ENCODE measurements at regions of chr7 and their contacts with region 1.

Region 1: GRCh38 chr7:26365077-26365900 is 73.6 kb downstream of the SNX10 start:
- DNase-seq: peak; percentile 72
- H3K4me3 Mint-ChIP-seq: no peak overlapping the region
- H3K27ac Mint-ChIP-seq: no peak overlapping the region
- H3K4me1 Mint-ChIP-seq: no peaks in the 10 kb centered on the region
- H3K27me3 Mint-ChIP-seq: no peaks in the 10 kb centered on the region
- CTCF ChIP-seq: peak; percentile 82

Region 2: DNA sequence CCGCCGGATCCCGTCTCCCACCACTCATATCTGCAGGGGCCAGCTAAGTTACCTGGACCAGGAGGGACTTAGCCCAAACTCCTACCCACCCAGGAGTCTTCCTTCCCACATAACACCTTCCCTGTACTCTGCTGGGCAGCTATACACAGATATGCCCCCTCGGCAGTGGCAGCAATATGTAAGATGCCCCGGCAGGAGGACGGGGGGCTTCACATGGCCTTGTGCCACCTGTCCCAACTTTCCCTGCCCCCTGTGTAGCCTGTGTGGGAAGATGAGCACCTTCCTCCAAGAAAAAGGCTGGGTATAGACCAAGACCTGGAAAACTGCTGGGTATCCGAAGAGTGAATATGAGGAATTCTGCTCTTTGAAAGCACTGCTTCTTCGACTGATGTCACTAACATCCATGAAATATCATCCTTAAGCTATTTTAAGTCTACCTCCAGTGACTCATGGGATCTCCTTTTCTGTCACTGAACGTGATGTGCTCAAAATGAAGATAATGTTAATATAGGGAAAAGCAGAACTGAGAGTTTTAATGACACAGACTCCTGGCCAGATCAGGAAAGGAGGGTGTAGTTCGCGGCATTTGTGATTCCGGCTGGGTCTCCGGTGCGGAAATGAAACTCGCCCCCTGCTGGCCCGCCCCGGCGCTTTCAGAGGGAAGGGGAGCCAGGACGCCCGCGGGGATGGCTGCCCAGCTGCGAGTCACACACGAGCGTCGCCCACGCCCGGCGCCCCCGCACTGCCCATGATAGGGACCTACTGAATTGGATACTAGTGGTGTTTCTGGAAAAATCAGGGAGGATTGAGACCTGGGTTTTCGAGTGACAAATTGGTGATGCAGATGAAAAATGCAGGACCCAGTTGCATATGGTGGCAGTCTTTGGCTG is 470.1 kb before region 1 on chr7:
- CTCF ChIA-PET with region 1: interaction called, 183 read pairs
- POLR2A ChIA-PET with region 1: interaction called, 18 read pairs
- intact Hi-C with region 1: loop called (anchors 1 kb)
- DNase-seq: peak; percentile 6
- H3K4me3 Mint-ChIP-seq: peak overlapping the region; percentile 45
- H3K27ac Mint-ChIP-seq: no peak overlapping the region
- H3K4me1 Mint-ChIP-seq: peaks cover 10% of the 10 kb centered on the region
- H3K27me3 Mint-ChIP-seq: no peaks in the 10 kb centered on the region
- CTCF ChIP-seq: peak; percentile 28

Region 3: GRCh38 chr7:26182283-26182682 is 183.0 kb before region 1 on chr7:
- CTCF ChIA-PET with region 1: interaction called, 12 read pairs
- POLR2A ChIA-PET with region 1: no interaction called
- intact Hi-C with region 1: no loop called
- DNase-seq: peak; percentile 52
- H3K4me3 Mint-ChIP-seq: no peak overlapping the region
- H3K27ac Mint-ChIP-seq: no peak overlapping the region
- H3K4me1 Mint-ChIP-seq: peaks cover 6% of the 10 kb centered on the region
- H3K27me3 Mint-ChIP-seq: no peaks in the 10 kb centered on the region
- CTCF ChIP-seq: no peak

Region 4: DNA sequence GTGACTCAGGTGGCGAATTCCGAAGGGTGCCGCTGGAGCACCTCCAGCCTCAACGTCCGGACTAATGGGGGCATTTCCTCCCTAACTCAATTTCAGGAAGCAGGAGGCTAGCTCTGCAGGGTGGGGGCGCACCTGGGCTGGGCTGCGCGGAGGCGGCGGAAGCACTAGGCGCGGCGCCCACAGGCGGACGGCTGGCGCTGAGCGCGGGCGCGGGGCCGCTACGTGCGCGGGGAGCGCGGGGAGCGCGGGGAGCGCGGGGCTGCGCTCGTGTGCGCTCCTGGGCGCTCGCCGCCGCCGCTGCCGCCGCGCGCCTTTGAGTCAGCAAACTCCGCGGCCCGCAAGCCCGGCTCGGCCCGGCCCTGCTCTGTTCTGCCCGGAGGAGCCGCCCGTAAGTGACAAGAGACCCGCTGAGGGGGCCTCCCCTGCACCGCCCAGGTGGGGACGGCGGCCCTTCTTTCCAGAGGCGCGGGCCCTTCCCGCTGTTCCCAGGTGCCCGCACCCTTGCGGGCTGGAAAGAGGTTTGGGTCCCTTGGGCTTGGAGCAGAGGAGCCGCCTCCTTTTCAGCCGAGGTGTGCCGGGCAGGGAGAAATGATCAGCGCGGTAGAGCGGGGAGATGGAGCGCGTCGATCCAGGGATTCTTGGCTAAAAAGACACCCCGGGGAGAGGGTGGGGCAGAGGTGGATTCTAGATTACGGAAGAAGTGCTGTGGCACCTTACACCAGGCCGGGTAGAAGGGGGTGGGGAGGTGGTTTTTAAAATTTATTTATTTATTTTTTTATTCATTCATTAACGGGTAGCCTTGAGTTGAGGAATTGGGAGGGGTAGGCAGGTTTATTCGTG is 73.4 kb before region 1 on chr7 and contains the start of gene SNX10:
- CTCF ChIA-PET with region 1: interaction called, 4 read pairs
- POLR2A ChIA-PET with region 1: interaction called, 4 read pairs
- intact Hi-C with region 1: loop called (anchors 5 kb)
- DNase-seq: peak; percentile 58
- H3K4me3 Mint-ChIP-seq: peak within 1 kb of the TSS; percentile 79
- H3K27ac Mint-ChIP-seq: peak within 1 kb of the TSS; percentile 66
- H3K4me1 Mint-ChIP-seq: peaks cover 14% of the 10 kb centered on the region
- H3K27me3 Mint-ChIP-seq: no peaks in the 10 kb centered on the region
- CTCF ChIP-seq: peak; percentile 12
- total RNA-seq, gene SNX10: 7.1 and 8.0 TPM in 2 replicates

Region 5: GRCh38 chr7:26381476-26382353 is 16.4 kb after region 1 on chr7:
- CTCF ChIA-PET with region 1: interaction called, 20 read pairs
- POLR2A ChIA-PET with region 1: no interaction called
- intact Hi-C with region 1: no loop called
- DNase-seq: no peak
- H3K4me3 Mint-ChIP-seq: no peak overlapping the region
- H3K27ac Mint-ChIP-seq: no peak overlapping the region
- H3K4me1 Mint-ChIP-seq: peaks cover 5% of the 10 kb centered on the region
- H3K27me3 Mint-ChIP-seq: no peaks in the 10 kb centered on the region
- CTCF ChIP-seq: no peak

Region 6: DNA sequence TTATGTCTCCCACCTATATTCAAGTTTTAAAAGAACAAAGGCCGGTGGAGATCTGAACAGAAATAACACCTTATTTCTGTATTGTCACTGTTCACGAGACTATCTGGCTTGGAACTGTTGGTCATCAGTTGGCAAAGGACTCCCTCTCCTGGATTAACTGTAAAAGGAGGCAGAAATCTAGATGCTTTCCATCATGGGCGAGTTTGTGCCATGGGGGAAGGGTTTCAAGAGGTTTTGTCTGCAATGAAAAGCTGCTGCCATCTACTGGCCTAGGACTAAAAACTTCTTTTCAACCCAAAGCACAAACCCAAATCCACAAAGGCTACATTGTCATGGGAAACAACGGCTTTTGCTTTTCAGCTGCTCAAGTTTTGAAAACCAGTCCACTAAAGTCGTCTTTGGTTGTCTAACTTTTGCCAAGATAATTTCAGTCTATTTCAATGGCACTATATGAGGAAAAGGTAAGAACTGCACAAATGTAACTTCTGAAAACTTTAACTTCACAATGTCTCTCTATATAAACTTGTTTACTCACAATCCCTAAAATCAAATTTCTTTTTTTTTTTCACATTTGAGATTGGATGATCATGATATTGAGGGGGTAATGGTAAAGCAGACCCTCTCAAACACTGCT is 302.3 kb after region 1 on chr7:
- CTCF ChIA-PET with region 1: interaction called, 78 read pairs
- POLR2A ChIA-PET with region 1: interaction called, 22 read pairs
- intact Hi-C with region 1: loop called (anchors 1 kb)
- DNase-seq: peak; percentile 96
- H3K4me3 Mint-ChIP-seq: no peak overlapping the region
- H3K27ac Mint-ChIP-seq: no peak overlapping the region
- H3K4me1 Mint-ChIP-seq: peaks cover 16% of the 10 kb centered on the region
- H3K27me3 Mint-ChIP-seq: no peaks in the 10 kb centered on the region
- CTCF ChIP-seq: peak; percentile 90

Region 7: DNA sequence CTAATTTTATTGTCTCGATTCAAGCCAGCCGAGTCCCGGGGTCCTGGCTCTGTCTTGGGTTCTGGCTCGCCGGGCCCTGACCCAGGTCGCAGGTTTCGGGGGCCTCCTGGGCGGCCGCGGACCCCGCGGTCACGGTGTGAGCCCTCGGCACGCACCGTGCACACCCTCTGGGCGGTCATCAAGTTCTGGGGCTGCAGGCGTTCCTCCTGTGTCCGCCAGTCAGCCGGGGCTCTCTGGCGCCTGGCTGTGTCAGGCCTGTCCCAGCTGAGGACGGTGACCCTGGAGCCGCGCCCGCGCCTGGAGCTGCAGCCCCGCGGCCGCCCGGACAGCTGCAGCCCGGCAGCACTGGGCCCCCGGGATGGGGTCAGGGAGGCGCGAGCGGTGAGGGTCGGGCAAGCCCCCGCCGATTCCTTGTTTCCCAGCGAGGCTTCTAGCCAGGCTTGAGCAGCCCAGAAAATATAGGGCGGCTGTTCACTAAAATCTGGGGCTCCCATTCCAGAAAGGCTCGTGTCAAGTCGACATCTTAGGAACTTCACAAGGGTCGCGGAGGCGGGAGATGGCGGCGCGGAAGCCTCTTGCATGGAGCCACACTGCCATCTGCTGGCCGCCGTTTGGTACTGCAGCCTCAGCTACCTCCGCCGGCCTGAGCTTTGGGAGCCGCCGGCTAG is 795.4 kb after region 1 on chr7:
- CTCF ChIA-PET with region 1: interaction called, 10 read pairs
- POLR2A ChIA-PET with region 1: interaction called, 4 read pairs
- intact Hi-C with region 1: loop called (anchors 1 kb)
- DNase-seq: peak; percentile 83
- H3K4me3 Mint-ChIP-seq: peak overlapping the region; percentile 84
- H3K27ac Mint-ChIP-seq: no peak overlapping the region
- H3K4me1 Mint-ChIP-seq: peaks cover 8% of the 10 kb centered on the region
- H3K27me3 Mint-ChIP-seq: no peaks in the 10 kb centered on the region
- CTCF ChIP-seq: peak; percentile 96